Esophagus squamous epithelium (tissue), 5 donors: ENCODE measurements at regions of chr16 and their contacts with region 1.

Region 1: DNA sequence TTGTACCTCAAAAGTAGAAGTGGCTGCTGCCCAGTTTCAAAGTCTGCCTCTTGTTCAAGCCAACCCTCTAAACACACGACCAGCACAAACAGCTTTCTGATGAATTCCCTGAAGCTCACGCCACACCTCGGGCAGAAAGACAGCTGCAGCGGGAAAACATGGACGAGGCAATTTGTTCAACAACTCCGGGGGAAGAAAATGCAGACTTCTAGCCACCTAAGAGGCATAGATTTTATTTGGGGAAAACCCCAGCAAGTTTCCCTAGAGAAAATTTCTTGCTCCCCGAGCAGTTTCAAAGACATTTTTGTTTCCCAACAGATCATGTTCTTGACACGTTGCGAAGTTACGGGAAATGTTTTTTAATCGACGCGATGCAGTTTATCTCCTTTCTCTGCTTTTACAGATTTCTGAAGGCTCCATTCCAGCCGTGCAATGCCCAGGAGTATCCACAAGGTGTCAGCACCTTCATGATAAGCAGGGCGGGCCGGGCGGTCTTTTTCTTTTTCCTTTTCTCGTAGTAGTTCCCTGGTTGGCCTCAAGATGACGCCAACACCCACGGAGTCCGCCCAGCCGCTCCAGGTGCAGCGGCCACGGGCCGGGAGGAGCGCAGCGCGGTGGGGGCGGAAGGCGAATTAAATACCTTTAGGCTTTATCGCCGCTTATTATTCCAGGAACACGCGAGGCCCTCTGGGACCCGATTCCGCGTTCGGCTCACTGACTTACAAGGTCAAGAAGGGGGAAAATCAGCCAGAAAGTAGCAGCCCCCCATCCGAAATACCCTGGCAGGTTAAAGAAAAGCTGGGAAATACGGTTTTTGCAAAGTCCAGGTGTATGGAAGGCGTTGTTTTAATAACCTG is 2.9 kb upstream of the FOXC2 start:
- DNase-seq: peak; percentile 35
- H3K4me3 ChIP-seq: peak overlapping the region in 1 of 4 donors; percentile 31
- H3K27ac ChIP-seq: no peak overlapping the region
- H3K4me1 ChIP-seq: peaks cover 4 to 41% (median 8%) of the 10 kb centered on the region in 3 donors
- H3K27me3 ChIP-seq: peaks cover 17 to 94% (median 30%) of the 10 kb centered on the region in 4 donors
- CTCF ChIP-seq: peak; percentile 100
- POLR2A ChIP-seq: no peak

Region 2: GRCh38 chr16:87062569-87063442 is 499.1 kb after region 1 on chr16:
- intact Hi-C with region 1: loop called (anchors 5 kb)
- DNase-seq: no peak
- H3K4me3 ChIP-seq: no peak overlapping the region
- H3K27ac ChIP-seq: no peak overlapping the region
- H3K4me1 ChIP-seq: peaks cover 0 to 6% (median 0%) of the 10 kb centered on the region in 3 donors
- H3K27me3 ChIP-seq: peaks cover 0 to 56% (median 0%) of the 10 kb centered on the region in 4 donors
- CTCF ChIP-seq: peak in 5 of 6 experiments; percentile 60 to 70 (median 67)
- POLR2A ChIP-seq: no peak

Region 3: DNA sequence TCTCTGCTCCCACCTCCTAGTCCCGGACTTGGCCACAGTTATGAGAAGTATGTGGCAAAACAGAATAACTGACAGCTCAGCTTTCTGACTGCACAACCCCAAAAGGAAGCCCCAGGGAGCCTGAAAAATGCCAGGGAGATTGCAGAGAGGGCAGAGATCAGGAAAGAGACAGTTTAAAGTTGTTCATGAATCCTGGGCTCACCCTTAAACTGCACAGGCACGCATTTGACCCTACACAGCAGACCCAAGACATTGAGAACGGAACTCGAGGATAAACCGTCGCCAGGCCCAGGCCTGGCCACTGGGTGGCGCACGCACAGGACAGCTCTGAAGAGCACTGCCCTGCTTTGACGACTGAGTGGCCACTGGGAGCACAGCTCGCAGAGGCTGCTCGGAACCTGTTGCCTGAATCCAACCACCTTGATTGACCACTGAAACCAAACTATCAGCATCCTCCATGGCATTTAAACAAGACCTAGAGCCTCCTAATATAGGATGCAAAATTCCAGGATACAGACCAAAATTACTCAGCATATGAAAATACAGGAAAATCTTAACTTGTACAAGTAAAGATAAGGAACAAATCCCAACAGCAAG is 639.4 kb after region 1 on chr16:
- intact Hi-C with region 1: no loop called
- DNase-seq: no peak
- H3K4me3 ChIP-seq: no peak overlapping the region
- H3K27ac ChIP-seq: no peak overlapping the region
- H3K4me1 ChIP-seq: peaks cover 4 to 17% (median 17%) of the 10 kb centered on the region in 3 donors
- H3K27me3 ChIP-seq: peaks cover 0 to 31% (median 0%) of the 10 kb centered on the region in 4 donors
- CTCF ChIP-seq: peak; percentile 35 to 80 (median 63)
- POLR2A ChIP-seq: no peak

Region 4: DNA sequence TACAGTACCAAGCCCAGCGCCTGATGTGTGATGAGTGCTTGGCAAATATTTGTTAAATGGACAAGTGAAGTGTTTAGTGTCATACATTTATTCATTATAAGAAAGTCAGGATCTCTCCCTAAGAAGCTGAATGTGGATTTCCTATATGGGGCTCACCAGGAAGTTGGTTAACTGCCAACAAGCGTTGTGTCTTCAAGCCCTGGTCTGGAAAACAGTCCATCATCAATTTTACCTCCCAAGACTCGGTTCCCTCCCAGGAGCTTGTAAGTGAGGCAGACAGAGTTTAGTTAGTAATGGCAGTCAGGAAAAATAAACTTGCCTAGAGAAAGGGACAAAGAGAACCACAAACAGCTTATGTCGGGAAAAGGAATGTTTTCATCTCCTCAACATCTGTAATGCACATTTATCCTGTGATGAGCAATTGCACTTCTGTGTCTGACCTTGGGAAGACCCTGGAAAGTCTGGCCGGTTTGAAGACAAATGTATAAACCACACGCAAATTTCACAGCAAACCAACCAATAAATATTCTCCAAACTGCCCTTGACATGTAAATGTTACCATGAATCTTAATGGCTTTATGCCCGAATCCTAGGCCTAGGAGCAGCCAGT is 725.1 kb after region 1 on chr16:
- intact Hi-C with region 1: loop called (anchors 10 kb)
- DNase-seq: no peak
- H3K4me3 ChIP-seq: no peak overlapping the region
- H3K27ac ChIP-seq: no peak overlapping the region
- H3K4me1 ChIP-seq: no peaks in the 10 kb centered on the region
- H3K27me3 ChIP-seq: no peaks in the 10 kb centered on the region
- CTCF ChIP-seq: no peak
- POLR2A ChIP-seq: no peak